MCF 10A (cell line): ENCODE measurements at regions of chr1 and their contacts with region 1.

Region 1: GRCh38 chr1:109493805-109494539 is at the start of gene CYB561D1:
- DNase-seq: peak; percentile 80
- H3K4me3 Mint-ChIP-seq: peak within 1 kb of the TSS; percentile 98
- H3K27ac Mint-ChIP-seq: peak within 1 kb of the TSS; percentile 75
- H3K4me1 Mint-ChIP-seq: no peaks in the 10 kb centered on the region
- H3K27me3 Mint-ChIP-seq: no peaks in the 10 kb centered on the region
- CTCF ChIP-seq: peak; percentile 92
- total RNA-seq, gene CYB561D1: 6.9 and 7.8 TPM in 2 replicates

Region 2: GRCh38 chr1:109426278-109427170 is 67.4 kb before region 1 on chr1 and contains the start of gene PSMA5:
- CTCF ChIA-PET with region 1: interaction called, 3 read pairs
- POLR2A ChIA-PET with region 1: interaction called, 6 read pairs
- intact Hi-C with region 1: loop called (anchors 5 kb)
- DNase-seq: peak; percentile 100
- H3K4me3 Mint-ChIP-seq: peak within 1 kb of the TSS; percentile 95
- H3K27ac Mint-ChIP-seq: peak within 1 kb of the TSS; percentile 90
- H3K4me1 Mint-ChIP-seq: peaks cover 24% of the 10 kb centered on the region
- H3K27me3 Mint-ChIP-seq: no peaks in the 10 kb centered on the region
- CTCF ChIP-seq: no peak
- total RNA-seq, gene PSMA5: 109 and 113 TPM in 2 replicates

Region 3: GRCh38 chr1:109472779-109473178 is 21.2 kb before region 1 on chr1:
- CTCF ChIA-PET with region 1: interaction called, 17 read pairs
- POLR2A ChIA-PET with region 1: no interaction called
- intact Hi-C with region 1: no loop called
- DNase-seq: no peak
- H3K4me3 Mint-ChIP-seq: no peak overlapping the region
- H3K27ac Mint-ChIP-seq: no peak overlapping the region
- H3K4me1 Mint-ChIP-seq: no peaks in the 10 kb centered on the region
- H3K27me3 Mint-ChIP-seq: peaks cover 86% of the 10 kb centered on the region
- CTCF ChIP-seq: no peak

Region 4: GRCh38 chr1:109483672-109484518 is 10.1 kb before region 1 on chr1 and contains the start of gene ATXN7L2:
- CTCF ChIA-PET with region 1: interaction called, 41 read pairs
- POLR2A ChIA-PET with region 1: interaction called, 6 read pairs
- intact Hi-C with region 1: no loop called
- DNase-seq: peak; percentile 89
- H3K4me3 Mint-ChIP-seq: peak within 1 kb of the TSS; percentile 83
- H3K27ac Mint-ChIP-seq: peak within 1 kb of the TSS; percentile 77
- H3K4me1 Mint-ChIP-seq: peaks cover 7% of the 10 kb centered on the region
- H3K27me3 Mint-ChIP-seq: peaks cover 24% of the 10 kb centered on the region
- CTCF ChIP-seq: no peak
- total RNA-seq, gene ATXN7L2: 3.8 and 7.3 TPM in 2 replicates

Region 5: GRCh38 chr1:109509176-109510134 is 15.5 kb after region 1 on chr1 and contains the start of gene AMIGO1:
- CTCF ChIA-PET with region 1: interaction called, 121 read pairs
- POLR2A ChIA-PET with region 1: interaction called, 4 read pairs
- intact Hi-C with region 1: no loop called
- DNase-seq: peak; percentile 49
- H3K4me3 Mint-ChIP-seq: peak within 1 kb of the TSS; percentile 76
- H3K27ac Mint-ChIP-seq: no peak within 1 kb of the TSS
- H3K4me1 Mint-ChIP-seq: peaks cover 11% of the 10 kb centered on the region
- H3K27me3 Mint-ChIP-seq: peaks cover 42% of the 10 kb centered on the region
- CTCF ChIP-seq: no peak
- total RNA-seq, gene AMIGO1: 0.21 and 0.29 TPM in 2 replicates

Region 6: DNA sequence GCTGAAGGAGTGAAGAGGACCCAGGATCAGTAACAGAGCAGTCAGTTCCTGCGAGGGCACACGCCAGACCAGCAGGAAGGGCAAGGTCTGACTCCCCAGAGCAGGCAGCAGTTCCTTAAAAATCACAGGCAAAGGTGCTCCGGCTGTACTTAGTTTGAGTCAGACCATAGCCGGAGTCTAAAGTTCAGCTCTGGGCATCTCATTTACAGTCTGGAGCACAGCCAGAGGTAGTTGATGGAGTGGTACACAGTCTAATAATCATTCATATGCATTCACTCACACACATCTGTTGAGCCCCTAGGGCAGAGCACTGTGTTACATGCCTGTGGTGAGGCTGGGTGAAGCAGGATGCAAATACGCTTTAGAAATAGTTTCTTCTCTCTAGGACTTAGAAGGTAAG is 22.9 kb after region 1 on chr1:
- CTCF ChIA-PET with region 1: interaction called, 1,071 read pairs
- POLR2A ChIA-PET with region 1: interaction called, 4 read pairs
- intact Hi-C with region 1: no loop called
- DNase-seq: no peak
- H3K4me3 Mint-ChIP-seq: no peak overlapping the region
- H3K27ac Mint-ChIP-seq: no peak overlapping the region
- H3K4me1 Mint-ChIP-seq: no peaks in the 10 kb centered on the region
- H3K27me3 Mint-ChIP-seq: peaks cover 11% of the 10 kb centered on the region
- CTCF ChIP-seq: no peak